Activated CD4-positive, alpha-beta T cell treated with anti-CD3 and anti-CD28 coated beads, Interleukin-2, amount 10 ng/mL, durations not matched to agents 7 days and 5 days (primary cell): ENCODE measurements at regions of chr15 and their contacts with region 1.

Region 1: DNA sequence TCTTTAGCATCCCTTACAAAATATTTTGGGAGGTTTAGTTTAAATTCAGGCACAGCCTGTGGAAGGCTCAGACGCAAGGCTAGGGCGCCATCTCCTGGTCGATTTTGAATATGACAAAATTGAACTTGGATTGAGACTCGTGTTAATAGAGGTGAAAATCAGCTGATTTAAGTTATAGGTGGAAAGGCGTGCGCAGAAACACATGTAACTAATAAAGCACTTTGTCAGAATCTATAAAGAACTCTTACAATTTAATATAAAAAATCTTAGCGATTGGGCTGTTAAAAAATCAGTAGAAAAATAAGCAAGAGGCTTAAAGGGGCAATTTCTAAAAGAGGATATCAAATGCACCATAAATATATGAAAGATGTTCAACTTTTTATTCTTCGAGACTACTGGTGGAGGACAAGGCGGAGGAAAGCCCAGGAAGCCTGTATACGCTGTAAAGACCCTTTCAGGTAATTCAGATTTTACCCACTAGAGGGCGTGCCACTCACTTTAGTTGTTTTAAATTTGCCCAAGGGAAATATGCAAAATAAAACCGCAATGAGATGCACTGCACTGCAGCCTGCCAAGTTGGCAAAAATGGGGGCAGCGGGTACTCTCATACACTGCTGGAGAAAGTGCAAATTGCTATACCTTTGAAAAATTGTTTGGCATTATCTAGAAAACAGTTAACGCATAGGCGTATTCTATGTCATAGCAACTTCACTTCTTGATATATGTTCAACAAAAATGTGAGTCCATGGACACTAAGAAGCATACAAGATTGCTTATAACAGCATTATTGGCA is 64.7 kb downstream of the SLC30A4 start:
- DNase-seq: peak; percentile 91
- H3K4me3 Mint-ChIP-seq: peak overlapping the region; percentile 70
- H3K27ac Mint-ChIP-seq: peak overlapping the region; percentile 79
- H3K4me1 Mint-ChIP-seq: peaks cover 54% of the 10 kb centered on the region
- H3K27me3 Mint-ChIP-seq: no peaks in the 10 kb centered on the region

Region 2: GRCh38 chr15:45402162-45402954 is 55.5 kb before region 1 on chr15:
- CTCF ChIA-PET with region 1: interaction called, 10 read pairs
- POLR2A ChIA-PET with region 1: no interaction called
- DNase-seq: peak; percentile 97
- H3K4me3 Mint-ChIP-seq: peak overlapping the region; percentile 100
- H3K27ac Mint-ChIP-seq: peak overlapping the region; percentile 98
- H3K4me1 Mint-ChIP-seq: peaks cover 42% of the 10 kb centered on the region
- H3K27me3 Mint-ChIP-seq: no peaks in the 10 kb centered on the region

Region 3: DNA sequence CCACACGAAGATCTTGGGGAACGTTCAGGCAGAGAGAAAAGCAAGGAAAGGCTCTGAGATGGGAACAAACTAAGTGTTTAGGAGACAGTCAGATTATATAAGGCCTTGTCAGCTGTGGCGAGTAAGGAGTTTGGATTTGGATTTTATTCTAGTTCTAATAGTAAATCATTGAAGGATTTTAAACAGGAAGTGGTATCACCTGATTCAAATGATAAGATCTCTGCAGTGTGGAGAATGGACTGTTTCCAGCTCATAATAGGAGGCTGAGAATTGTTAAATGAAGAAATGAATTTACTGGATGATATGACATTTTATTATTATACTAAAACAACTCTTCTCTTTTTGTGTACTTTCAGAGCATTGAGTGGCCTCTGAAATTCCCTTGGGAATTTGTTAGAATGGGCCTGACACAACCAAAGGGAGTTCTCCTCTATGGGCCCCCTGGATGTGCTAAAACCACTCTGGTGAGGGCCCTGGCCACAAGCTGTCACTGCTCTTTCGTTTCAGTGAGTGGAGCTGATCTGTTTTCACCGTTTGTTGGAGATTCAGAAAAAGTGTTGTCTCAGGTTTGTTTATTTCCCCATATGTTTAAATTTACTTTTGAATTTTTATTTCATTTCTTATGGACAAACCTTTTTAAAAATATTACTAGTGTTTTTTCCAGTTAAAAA is 43.5 kb before region 1 on chr15:
- CTCF ChIA-PET with region 1: interaction called, 11 read pairs
- POLR2A ChIA-PET with region 1: no interaction called
- DNase-seq: no peak
- H3K4me3 Mint-ChIP-seq: no peak overlapping the region
- H3K27ac Mint-ChIP-seq: no peak overlapping the region
- H3K4me1 Mint-ChIP-seq: peaks cover 19% of the 10 kb centered on the region
- H3K27me3 Mint-ChIP-seq: no peaks in the 10 kb centered on the region

Region 4: GRCh38 chr15:45429974-45430792 is 27.7 kb before region 1 on chr15:
- CTCF ChIA-PET with region 1: interaction called, 46 read pairs
- POLR2A ChIA-PET with region 1: no interaction called
- DNase-seq: peak; percentile 87
- H3K4me3 Mint-ChIP-seq: peak overlapping the region; percentile 50
- H3K27ac Mint-ChIP-seq: no peak overlapping the region
- H3K4me1 Mint-ChIP-seq: peaks cover 5% of the 10 kb centered on the region
- H3K27me3 Mint-ChIP-seq: peaks cover 26% of the 10 kb centered on the region

Region 5: DNA sequence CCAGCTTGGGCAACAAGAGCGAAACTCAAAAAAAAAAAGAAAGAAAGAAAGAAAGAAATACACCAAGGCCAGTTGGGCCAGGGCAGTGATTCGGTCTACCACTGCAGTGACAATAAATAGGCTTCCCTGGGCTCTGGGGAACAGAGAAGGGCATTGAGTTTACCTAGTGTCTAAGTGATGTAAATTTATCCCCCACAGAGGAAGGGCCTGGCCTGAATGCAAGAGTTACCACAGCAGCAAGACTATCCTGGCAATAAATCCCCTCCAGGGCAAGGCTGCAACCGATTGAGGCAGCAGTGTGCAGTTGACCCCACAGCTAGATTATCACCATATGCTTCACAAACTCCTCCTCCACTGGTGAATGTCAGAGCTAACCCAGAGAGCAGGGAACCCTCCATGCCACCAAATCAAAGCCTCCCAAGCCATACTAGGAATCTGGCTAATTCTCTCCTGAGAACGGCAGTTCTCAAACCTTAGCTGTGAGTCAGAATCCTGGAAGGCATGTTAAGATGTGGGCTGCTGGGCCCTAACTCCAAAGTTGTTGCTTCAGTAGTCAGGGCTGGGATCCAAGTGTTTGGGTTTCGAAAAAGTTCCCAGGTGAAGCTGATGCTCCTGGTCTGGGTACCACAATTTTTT is 15.2 kb before region 1 on chr15:
- CTCF ChIA-PET with region 1: interaction called, 10 read pairs
- POLR2A ChIA-PET with region 1: no interaction called
- DNase-seq: no peak
- H3K4me3 Mint-ChIP-seq: no peak overlapping the region
- H3K27ac Mint-ChIP-seq: no peak overlapping the region
- H3K4me1 Mint-ChIP-seq: no peaks in the 10 kb centered on the region
- H3K27me3 Mint-ChIP-seq: peaks cover 5% of the 10 kb centered on the region

Region 6: DNA sequence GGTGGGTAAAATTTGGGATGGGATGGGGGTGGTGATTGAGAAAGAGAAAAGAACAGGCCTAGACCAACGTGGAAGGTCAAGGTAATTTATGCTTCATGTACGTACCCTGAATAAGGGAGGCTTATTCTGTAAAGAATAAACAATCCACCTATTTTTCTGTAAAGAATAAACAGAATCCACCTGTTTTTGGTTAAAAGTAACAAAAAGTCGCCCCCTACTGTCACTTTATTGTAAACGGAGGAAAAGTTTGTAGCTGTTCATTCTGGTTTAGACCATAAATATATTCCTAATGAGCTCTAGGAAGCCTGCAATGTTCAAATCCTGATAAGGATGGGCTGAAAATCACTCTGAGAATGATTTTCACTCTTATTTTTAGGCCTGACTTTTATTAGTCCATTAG is 153.5 kb after region 1 on chr15:
- CTCF ChIA-PET with region 1: interaction called, 27 read pairs
- POLR2A ChIA-PET with region 1: no interaction called
- DNase-seq: peak; percentile 24
- H3K4me3 Mint-ChIP-seq: no peak overlapping the region
- H3K27ac Mint-ChIP-seq: no peak overlapping the region
- H3K4me1 Mint-ChIP-seq: peaks cover 7% of the 10 kb centered on the region
- H3K27me3 Mint-ChIP-seq: no peaks in the 10 kb centered on the region